ENCODE measurements at regions of chr4 and their contacts with region 1.

Region 1: GRCh38 chr4:41725254-41725653 is 23.3 kb downstream of the PHOX2B start:
- DNase-seq: peak in 1 of 2 experiments; percentile 69
- H3K4me3 ChIP-seq: no peak overlapping the region
- H3K27ac ChIP-seq: no peak overlapping the region
- H3K4me1 ChIP-seq: no peaks in the 10 kb centered on the region
- H3K27me3 ChIP-seq: peaks cover 0 to 4% (median 2%) of the 10 kb centered on the region in 4 experiments; a peak in 3 of 7 replicates
- CTCF ChIP-seq: peak in 2 of 3 experiments; percentile 59 to 64; a peak in 3 of 4 replicates
- EP300 ChIP-seq: no peak
- POLR2A ChIP-seq: no peak
- RAD21 ChIP-seq: peak; percentile 79 to 81

Region 2: GRCh38 chr4:41701961-41702360 is 23.3 kb before region 1 on chr4:
- CTCF ChIA-PET with region 1: interaction called, 20 read pairs
- POLR2A ChIA-PET with region 1: no interaction called
- DNase-seq: no peak
- H3K4me3 ChIP-seq: no peak overlapping the region
- H3K27ac ChIP-seq: no peak overlapping the region
- H3K4me1 ChIP-seq: no peaks in the 10 kb centered on the region
- H3K27me3 ChIP-seq: no peaks in the 10 kb centered on the region; a peak in 1 of 7 replicates
- CTCF ChIP-seq: no peak
- EP300 ChIP-seq: no peak
- POLR2A ChIP-seq: no peak
- RAD21 ChIP-seq: no peak

Region 3: GRCh38 chr4:41741354-41741753 is 16.1 kb after region 1 on chr4:
- CTCF ChIA-PET with region 1: interaction called, 14 read pairs
- POLR2A ChIA-PET with region 1: no interaction called
- DNase-seq: no peak
- H3K4me3 ChIP-seq: no peak overlapping the region
- H3K27ac ChIP-seq: no peak overlapping the region
- H3K4me1 ChIP-seq: peaks cover 2 to 6% (median 3%) of the 10 kb centered on the region in 4 experiments; a peak in 6 of 7 replicates
- H3K27me3 ChIP-seq: peaks cover 40 to 68% (median 58%) of the 10 kb centered on the region in 4 experiments
- CTCF ChIP-seq: no peak
- EP300 ChIP-seq: no peak
- POLR2A ChIP-seq: no peak
- RAD21 ChIP-seq: no peak

Region 4: DNA sequence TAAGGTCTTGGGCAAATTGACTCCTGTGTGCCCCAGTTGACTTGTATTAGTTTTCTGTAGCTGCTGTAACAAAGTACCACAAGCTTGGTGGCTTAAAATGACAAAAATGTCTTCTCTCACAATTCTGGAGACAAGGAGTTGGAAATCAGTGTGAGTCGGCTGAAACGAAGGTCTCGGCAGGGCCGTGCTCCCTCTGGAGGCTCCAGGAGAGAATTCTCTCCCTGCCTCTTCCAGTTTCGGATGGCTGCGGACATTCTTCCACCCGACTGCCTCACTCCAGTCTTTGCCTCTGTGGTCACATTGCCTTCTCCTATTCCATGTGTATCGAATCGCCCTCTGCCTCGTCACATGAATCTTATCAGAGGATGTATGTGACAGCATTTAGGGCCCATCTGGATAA is 89.3 kb after region 1 on chr4:
- CTCF ChIA-PET with region 1: interaction called, 25 read pairs
- POLR2A ChIA-PET with region 1: no interaction called
- DNase-seq: peak in 1 of 2 experiments; percentile 58
- H3K4me3 ChIP-seq: no peak overlapping the region
- H3K27ac ChIP-seq: no peak overlapping the region
- H3K4me1 ChIP-seq: no peaks in the 10 kb centered on the region
- H3K27me3 ChIP-seq: no peaks in the 10 kb centered on the region
- CTCF ChIP-seq: peak; percentile 61 to 78 (median 68)
- EP300 ChIP-seq: no peak
- POLR2A ChIP-seq: no peak
- RAD21 ChIP-seq: peak; percentile 73 to 75

Region 5: DNA sequence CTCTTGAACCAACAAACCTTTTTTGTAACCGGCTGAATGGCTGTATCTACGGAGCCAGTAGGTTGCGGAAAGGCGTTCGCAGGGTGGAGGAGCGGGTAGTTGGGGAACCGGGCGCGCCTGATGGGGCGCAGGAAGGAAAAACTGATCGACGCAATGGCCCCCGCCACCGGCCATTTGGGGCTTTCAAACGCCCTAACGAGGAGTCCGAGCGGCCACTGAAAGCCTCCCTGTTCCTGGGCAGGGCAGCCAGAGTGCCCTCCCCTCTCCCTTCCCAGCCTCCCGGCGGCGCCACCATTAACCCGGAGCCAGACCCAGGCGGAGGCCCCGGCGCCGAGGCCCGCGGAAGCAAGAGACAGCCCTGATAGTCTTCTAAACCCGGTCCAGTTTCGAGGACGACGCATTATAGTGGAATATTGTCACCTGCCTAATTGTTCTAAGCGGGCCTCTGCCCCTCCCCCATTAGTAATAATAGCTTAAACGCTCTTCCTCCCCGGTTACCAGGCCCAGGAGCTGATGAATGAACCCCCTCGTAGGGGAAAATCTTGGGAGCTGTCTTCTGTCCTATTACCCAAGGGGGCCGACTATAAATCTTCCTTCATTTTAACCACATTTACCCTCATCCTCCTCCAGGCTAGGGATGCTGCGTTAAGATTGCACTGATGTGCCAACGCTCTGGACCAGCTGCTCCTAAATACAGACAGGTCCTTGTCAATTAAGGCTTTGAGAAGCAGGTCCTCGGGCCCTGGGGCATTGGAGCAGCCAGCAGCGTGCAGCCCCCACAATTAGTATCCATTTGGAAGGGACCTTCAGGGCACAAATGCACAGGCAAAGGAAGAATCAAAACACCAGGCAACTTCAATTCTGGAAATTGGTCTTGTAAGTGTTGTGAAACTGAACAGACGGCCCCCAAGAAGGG is 148.4 kb after region 1 on chr4:
- CTCF ChIA-PET with region 1: interaction called, 11 read pairs
- POLR2A ChIA-PET with region 1: no interaction called
- DNase-seq: peak in 1 of 2 experiments; percentile 77
- H3K4me3 ChIP-seq: peak overlapping the region; percentile 19 to 51 (median 34); a peak in 5 of 8 replicates
- H3K27ac ChIP-seq: no peak overlapping the region
- H3K4me1 ChIP-seq: peaks cover 0 to 8% (median 5%) of the 10 kb centered on the region in 4 experiments; a peak in 5 of 7 replicates
- H3K27me3 ChIP-seq: peaks cover 72 to 98% (median 89%) of the 10 kb centered on the region in 4 experiments
- CTCF ChIP-seq: no peak
- EP300 ChIP-seq: no peak
- POLR2A ChIP-seq: no peak
- RAD21 ChIP-seq: no peak

Region 6: GRCh38 chr4:41882625-41883347 is 157.5 kb after region 1 on chr4:
- CTCF ChIA-PET with region 1: interaction called, 58 read pairs
- POLR2A ChIA-PET with region 1: no interaction called
- DNase-seq: peak in 1 of 2 experiments; percentile 67
- H3K4me3 ChIP-seq: peak overlapping the region in 2 of 4 experiments; percentile 33 to 63; a peak in 4 of 8 replicates
- H3K27ac ChIP-seq: no peak overlapping the region
- H3K4me1 ChIP-seq: peaks cover 0 to 24% (median 15%) of the 10 kb centered on the region in 4 experiments; a peak in 6 of 7 replicates
- H3K27me3 ChIP-seq: peaks cover 50 to 69% (median 68%) of the 10 kb centered on the region in 4 experiments
- CTCF ChIP-seq: peak in 2 of 3 experiments; percentile 67 to 75; a peak in 3 of 4 replicates
- EP300 ChIP-seq: no peak
- POLR2A ChIP-seq: no peak
- RAD21 ChIP-seq: peak; percentile 66 to 78

Measured in H1 (cell line).